CD8-positive, alpha-beta memory T cell (primary cell): ENCODE measurements at regions of chr7 and their contacts with region 1.

Region 1: DNA sequence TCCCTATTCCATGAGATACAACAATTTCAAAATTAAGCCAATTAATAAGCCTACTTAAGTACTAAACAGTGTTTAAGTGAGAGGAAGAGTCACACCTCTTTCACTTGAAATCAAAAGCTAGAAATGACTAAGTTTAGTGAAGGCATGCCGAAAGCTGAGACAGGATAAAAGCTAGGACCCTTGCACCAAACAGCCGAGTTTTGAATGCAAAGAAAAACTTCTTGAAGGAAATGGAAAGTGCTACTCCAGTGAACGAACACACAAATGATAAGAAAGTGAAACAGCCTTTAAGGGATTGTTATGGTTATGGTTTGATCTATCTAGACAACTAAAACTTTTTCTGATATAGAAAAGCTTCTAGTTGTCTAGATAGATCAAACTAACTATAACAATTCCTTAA is 135.4 kb upstream of the KMT2E start:
- DNase-seq: no peak
- H3K4me3 ChIP-seq: no peak overlapping the region
- H3K4me3 Mint-ChIP-seq: peak overlapping the region in 3 of 7 donors; percentile 9 to 47 (median 10)
- H3K27ac ChIP-seq: no peak overlapping the region
- H3K27ac Mint-ChIP-seq: peak overlapping the region in 5 of 8 donors; percentile 2 to 76 (median 27)
- H3K4me1 ChIP-seq: no peaks in the 10 kb centered on the region
- H3K4me1 Mint-ChIP-seq: peaks cover 6 to 17% (median 10%) of the 10 kb centered on the region in 3 donors
- H3K27me3 ChIP-seq: no peaks in the 10 kb centered on the region
- H3K27me3 Mint-ChIP-seq: peaks cover 0 to 3% of the 10 kb centered on the region in 2 donors

Region 2: GRCh38 chr7:104923010-104923421 is 44.4 kb after region 1 on chr7:
- CTCF ChIA-PET with region 1: interaction called, 158 read pairs
- POLR2A ChIA-PET with region 1: interaction called, 6 read pairs
- DNase-seq: peak; percentile 35 to 85 (median 61)
- H3K4me3 ChIP-seq: no peak overlapping the region
- H3K4me3 Mint-ChIP-seq: no peak overlapping the region
- H3K27ac ChIP-seq: no peak overlapping the region
- H3K27ac Mint-ChIP-seq: peak overlapping the region in 5 of 8 donors; percentile 24 to 70 (median 47)
- H3K4me1 ChIP-seq: peaks cover 5% of the 10 kb centered on the region
- H3K4me1 Mint-ChIP-seq: peaks cover 3 to 8% (median 4%) of the 10 kb centered on the region in 3 donors
- H3K27me3 ChIP-seq: no peaks in the 10 kb centered on the region
- H3K27me3 Mint-ChIP-seq: no peaks in the 10 kb centered on the region